PC-9 (cell line): ENCODE measurements at regions of chr1 and their contacts with region 1.

Region 1: DNA sequence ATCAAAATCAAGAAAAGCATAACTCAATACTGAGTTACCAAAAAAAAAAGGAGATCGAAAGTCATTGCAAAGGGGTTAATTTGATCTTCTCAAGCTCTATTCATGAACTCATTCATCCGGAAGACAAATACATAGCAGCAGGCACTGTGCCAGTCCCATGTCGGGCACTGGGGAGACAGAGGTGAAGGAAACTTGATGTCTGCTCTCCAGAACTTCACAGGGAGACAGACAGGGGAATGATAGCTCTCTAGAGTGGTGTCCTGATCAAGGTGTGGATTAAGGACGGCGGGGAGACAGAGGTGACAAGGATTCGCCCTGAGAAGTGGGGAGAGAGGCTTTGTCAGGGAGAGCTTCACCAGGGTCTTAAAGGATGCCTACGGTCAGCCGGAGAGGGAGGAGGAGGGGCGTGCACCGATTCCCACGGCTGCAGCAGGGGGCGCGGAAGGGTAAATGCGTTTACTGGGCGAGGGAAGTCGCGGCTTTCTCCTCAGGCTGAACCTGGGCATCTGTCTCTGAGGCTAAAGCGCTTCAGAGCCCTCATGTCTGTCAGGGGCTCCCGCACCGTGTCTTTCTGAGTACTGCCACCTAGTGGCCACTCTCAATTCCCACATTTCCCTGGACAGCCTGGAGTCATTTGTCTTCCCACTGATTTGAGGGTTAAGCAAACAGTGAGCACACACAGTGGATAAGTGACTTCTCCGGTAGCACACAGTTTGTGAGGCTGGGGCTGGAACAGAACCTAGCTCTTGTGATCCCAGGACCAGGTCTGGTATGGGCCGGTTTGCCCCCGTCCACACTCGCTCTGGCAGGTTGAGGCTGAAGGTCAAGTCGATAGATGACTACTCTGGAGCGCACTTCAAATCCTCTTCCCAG is 152.8 kb downstream of the TENT5C start:
- DNase-seq: peak; percentile 80 to 83
- H3K4me3 ChIP-seq: peak overlapping the region; percentile 60
- H3K27ac ChIP-seq: no peak overlapping the region
- H3K4me1 ChIP-seq: peaks cover 21% of the 10 kb centered on the region
- H3K27me3 ChIP-seq: no peaks in the 10 kb centered on the region
- CTCF ChIP-seq: peak; percentile 98

Region 2: DNA sequence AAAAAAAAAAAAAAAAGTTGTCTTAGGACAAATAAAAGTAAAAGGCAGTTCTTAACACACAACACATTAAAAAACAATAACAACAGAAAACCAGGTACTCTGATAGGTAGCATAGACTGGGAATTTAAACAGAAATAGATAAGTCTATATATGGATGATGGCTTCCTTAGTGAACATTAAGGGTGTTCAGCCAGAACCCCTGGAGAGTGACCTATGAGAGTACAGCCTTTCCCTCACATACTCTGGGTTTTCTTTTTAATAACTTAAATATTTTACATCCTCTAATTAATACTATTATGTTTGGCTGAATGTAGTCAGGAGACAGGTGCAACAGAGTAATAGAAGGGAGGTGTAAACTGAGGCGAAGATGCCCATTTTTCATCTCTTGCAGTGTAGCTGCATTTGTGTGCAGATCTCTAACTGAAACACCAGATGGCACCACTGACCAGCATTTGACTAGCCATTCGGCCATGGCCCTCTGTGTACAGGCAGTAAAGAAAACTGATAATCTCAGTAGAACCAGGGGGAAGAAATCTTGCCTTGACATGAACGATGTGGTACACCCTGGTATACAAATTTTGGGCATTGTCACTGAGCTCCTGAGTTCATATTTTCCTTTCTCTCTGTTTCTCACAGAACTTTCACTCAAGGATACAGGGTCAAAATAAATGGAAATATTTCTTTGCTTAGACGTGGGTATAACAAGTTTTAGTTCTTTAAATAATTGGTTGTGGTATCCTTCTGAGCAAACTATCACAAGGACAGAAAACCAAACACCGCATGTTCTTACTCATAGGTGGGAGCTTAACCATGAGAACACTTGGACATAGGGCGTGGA is 690.9 kb before region 1 on chr1:
- CTCF ChIA-PET with region 1: no interaction called
- POLR2A ChIA-PET with region 1: no interaction called
- intact Hi-C with region 1: loop called (anchors 5 kb)
- DNase-seq: peak; percentile 43 to 48
- H3K4me3 ChIP-seq: no peak overlapping the region
- H3K27ac ChIP-seq: no peak overlapping the region
- H3K4me1 ChIP-seq: no peaks in the 10 kb centered on the region
- H3K27me3 ChIP-seq: no peaks in the 10 kb centered on the region
- CTCF ChIP-seq: peak; percentile 95

Region 3: GRCh38 chr1:117260761-117261423 is 497.8 kb before region 1 on chr1:
- CTCF ChIA-PET with region 1: no interaction called
- POLR2A ChIA-PET with region 1: no interaction called
- intact Hi-C with region 1: no loop called
- DNase-seq: no peak
- H3K4me3 ChIP-seq: no peak overlapping the region
- H3K27ac ChIP-seq: no peak overlapping the region
- H3K4me1 ChIP-seq: no peaks in the 10 kb centered on the region
- H3K27me3 ChIP-seq: no peaks in the 10 kb centered on the region
- CTCF ChIP-seq: no peak

Region 4: DNA sequence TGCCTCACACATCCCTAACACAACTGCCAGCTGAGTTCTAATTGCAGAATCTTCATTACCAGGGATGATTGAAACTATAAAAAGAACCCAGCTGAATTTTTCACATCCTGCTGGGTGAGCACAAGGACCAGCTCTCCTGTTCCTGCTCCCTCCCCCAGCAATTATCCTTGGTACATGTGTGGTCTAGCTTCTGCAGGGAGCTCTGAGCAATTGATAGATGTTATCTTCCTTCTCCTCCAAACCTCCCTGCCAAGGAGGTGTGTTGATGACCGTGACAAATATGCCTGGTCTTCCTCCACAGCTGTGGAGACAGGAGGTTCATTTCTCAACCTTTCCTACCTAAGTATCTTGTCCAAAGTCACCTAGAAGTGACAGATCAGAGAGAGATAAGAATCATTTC is 456.8 kb before region 1 on chr1:
- CTCF ChIA-PET with region 1: no interaction called
- POLR2A ChIA-PET with region 1: no interaction called
- intact Hi-C with region 1: loop called (anchors 10 kb)
- DNase-seq: no peak
- H3K4me3 ChIP-seq: no peak overlapping the region
- H3K27ac ChIP-seq: no peak overlapping the region
- H3K4me1 ChIP-seq: no peaks in the 10 kb centered on the region
- H3K27me3 ChIP-seq: no peaks in the 10 kb centered on the region
- CTCF ChIP-seq: no peak

Region 5: DNA sequence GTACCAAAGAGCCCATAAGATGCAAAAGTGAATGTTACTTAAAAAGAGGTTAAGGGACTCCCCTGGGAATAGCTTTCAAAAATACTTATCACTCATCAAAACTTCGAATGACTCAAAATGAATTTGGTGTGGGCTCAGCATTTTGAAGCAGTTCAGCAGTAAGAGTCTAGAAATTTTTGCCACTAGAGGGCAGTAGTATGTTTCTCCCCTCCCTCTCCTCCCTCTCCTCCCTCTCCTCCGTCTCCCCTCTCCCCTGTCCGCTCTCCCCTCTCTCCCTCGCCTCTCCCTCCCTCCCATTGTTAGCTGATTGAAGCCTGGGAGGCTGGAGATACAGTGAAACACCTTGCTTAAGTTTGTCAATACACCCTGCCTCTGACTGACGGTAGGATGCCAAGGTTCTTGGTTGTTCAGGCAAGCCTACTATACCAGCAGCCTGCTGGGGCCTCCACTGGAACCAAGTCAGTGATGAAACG is 223.6 kb before region 1 on chr1:
- CTCF ChIA-PET with region 1: interaction called, 18 read pairs
- POLR2A ChIA-PET with region 1: no interaction called
- intact Hi-C with region 1: loop called (anchors 1 kb)
- DNase-seq: peak; percentile 33 to 60
- H3K4me3 ChIP-seq: no peak overlapping the region
- H3K27ac ChIP-seq: no peak overlapping the region
- H3K4me1 ChIP-seq: peaks cover 17% of the 10 kb centered on the region
- H3K27me3 ChIP-seq: no peaks in the 10 kb centered on the region
- CTCF ChIP-seq: peak; percentile 90

Region 6: GRCh38 chr1:117674521-117675397 is 83.9 kb before region 1 on chr1:
- CTCF ChIA-PET with region 1: interaction called, 3 read pairs
- POLR2A ChIA-PET with region 1: no interaction called
- intact Hi-C with region 1: loop called (anchors 5 kb)
- DNase-seq: peak in 1 of 2 experiments; percentile 55
- H3K4me3 ChIP-seq: no peak overlapping the region
- H3K27ac ChIP-seq: no peak overlapping the region
- H3K4me1 ChIP-seq: peaks cover 7% of the 10 kb centered on the region
- H3K27me3 ChIP-seq: no peaks in the 10 kb centered on the region
- CTCF ChIP-seq: peak; percentile 51; the same call in 1 of the 2 replicates

Region 7: GRCh38 chr1:117895482-117896114 is 136.9 kb after region 1 on chr1:
- CTCF ChIA-PET with region 1: interaction called, 4 read pairs
- POLR2A ChIA-PET with region 1: no interaction called
- intact Hi-C with region 1: loop called (anchors 1 kb)
- DNase-seq: peak; percentile 51 to 69
- H3K4me3 ChIP-seq: no peak overlapping the region
- H3K27ac ChIP-seq: no peak overlapping the region
- H3K4me1 ChIP-seq: no peaks in the 10 kb centered on the region
- H3K27me3 ChIP-seq: no peaks in the 10 kb centered on the region
- CTCF ChIP-seq: peak; percentile 98